ENCODE measurements at regions of chr6 and their contacts with region 1.

Region 1: DNA sequence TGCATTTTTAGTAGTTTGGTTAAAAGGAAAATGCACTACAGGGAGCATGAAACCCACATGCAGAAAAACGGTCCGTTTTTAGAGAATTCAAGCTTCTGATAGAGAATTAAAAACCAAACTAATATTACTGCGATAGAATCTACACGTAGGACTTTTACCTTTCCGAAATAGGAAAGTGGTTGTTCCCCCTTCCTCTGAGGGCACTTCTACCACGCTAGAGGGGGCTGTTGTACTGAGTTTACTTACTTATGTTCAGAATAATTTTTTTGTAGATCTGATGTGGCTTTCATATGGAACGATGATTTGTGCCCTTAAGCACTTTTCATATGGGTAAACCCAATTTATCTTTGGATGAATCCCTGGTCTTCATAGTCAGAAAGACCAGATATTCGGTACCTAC is 264.3 kb upstream of the PLN start:
- DNase-seq: peak; percentile 64
- H3K4me3 ChIP-seq: no peak overlapping the region
- H3K27ac ChIP-seq: no peak overlapping the region
- H3K4me1 ChIP-seq: peaks cover 8% of the 10 kb centered on the region
- H3K27me3 ChIP-seq: peaks cover 0 to 2% of the 10 kb centered on the region in 2 experiments
- CTCF ChIP-seq: peak; percentile 63 to 65
- POLR2A ChIP-seq: no peak

Region 2: GRCh38 chr6:117840541-117840983 is 443.2 kb before region 1 on chr6:
- CTCF ChIA-PET with region 1: interaction called, 4 read pairs
- POLR2A ChIA-PET with region 1: no interaction called
- dilution Hi-C with region 1: no loop called
- intact Hi-C with region 1: loop called (anchors 5 kb)
- DNase-seq: peak; percentile 41
- H3K4me3 ChIP-seq: no peak overlapping the region
- H3K27ac ChIP-seq: no peak overlapping the region
- H3K4me1 ChIP-seq: no peaks in the 10 kb centered on the region
- H3K27me3 ChIP-seq: no peaks in the 10 kb centered on the region
- CTCF ChIP-seq: peak; percentile 9 to 11
- POLR2A ChIP-seq: no peak

Region 3: DNA sequence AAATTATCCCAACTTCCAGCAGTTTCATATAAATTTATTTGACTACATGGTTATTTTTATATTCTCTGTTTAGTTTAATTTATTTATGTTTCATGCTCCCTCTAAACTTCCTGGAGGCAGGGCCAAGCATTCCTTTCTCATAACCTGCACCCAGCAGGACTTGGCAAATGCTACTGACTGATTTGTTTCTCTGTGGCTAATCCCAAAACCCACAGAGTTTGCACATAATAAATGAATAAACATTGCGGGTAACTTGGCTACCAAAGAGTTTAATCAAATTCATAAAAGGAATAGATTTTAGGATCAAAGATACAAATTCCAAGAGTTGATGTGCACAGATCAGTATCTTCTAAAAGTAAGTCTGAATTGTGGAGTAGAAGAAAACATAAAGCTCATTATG is 137.2 kb before region 1 on chr6:
- CTCF ChIA-PET with region 1: no interaction called
- POLR2A ChIA-PET with region 1: no interaction called
- dilution Hi-C with region 1: no loop called
- intact Hi-C with region 1: no loop called
- DNase-seq: no peak
- H3K4me3 ChIP-seq: no peak overlapping the region
- H3K27ac ChIP-seq: no peak overlapping the region
- H3K4me1 ChIP-seq: no peaks in the 10 kb centered on the region
- H3K27me3 ChIP-seq: no peaks in the 10 kb centered on the region
- CTCF ChIP-seq: no peak
- POLR2A ChIP-seq: no peak

Region 4: DNA sequence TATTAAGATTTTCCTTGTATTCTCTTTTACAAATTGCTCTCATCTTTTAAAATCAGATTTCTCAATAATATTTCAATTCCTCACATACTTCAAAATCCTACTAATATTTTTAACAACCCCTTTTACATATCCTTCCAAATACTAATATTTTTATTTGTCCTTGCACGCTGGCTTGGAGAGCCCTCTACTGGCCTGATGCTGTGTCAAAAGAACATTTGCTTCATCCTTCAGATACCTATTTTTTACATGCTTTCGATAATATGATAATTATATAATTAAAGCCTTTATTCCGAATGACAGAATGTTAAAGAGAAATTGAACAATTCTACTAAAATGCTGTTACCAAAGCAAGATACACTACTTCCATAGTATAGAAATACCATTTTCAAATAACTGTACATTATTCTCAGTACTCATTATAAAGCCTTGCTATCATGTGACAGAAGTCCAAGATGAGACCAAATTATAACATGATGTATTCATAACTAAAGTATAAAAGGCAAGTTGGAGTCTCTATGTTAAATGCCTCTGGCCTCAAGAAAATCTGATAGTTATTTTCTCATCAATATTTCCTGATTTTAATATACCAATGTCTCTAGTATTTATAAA is 225.3 kb after region 1 on chr6:
- CTCF ChIA-PET with region 1: interaction called, 42 read pairs
- POLR2A ChIA-PET with region 1: no interaction called
- dilution Hi-C with region 1: no loop called
- intact Hi-C with region 1: loop called (anchors 1 kb)
- DNase-seq: peak; percentile 60
- H3K4me3 ChIP-seq: no peak overlapping the region
- H3K27ac ChIP-seq: no peak overlapping the region
- H3K4me1 ChIP-seq: no peaks in the 10 kb centered on the region
- H3K27me3 ChIP-seq: no peaks in the 10 kb centered on the region
- CTCF ChIP-seq: peak; percentile 48 to 54
- POLR2A ChIP-seq: no peak

Region 5: DNA sequence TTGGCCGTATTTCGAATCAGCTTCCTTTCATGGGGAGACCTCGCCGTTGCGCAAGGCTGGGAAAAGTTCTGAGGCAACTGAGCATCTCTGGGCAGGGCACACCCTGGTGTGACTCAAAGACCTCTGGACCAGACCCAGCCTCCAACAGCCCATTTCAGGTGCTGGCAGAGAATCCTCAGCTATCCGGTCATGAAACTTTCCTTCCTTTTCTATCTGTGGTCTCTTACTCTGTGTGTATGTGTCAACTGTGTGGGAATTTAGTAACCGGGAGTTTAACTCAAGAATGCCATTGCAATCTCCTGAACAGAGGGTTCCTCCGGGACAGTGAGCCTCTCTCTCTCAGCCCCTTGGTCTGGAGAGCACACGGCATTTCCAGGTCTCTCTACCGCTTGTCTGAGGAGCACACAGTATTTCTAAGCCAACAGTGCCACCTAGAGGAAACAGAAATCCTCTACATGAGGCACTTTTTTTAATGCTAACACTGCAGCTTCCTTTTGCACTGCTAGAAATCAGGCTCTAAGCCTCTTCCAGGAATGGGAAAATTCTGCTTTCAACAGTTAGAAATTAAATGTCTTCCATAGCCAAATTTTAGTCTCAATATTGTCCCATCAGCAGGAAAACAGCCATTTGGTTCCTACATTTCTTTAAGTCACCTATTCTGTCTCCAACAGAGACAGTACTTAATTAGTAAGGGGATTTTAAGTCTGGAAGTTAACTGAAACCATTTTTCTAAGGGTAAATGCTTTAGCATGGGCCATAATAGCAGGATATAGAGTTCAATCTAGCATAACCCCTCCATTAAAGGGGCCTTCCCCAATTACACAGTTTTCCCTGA is 297.0 kb after region 1 on chr6:
- CTCF ChIA-PET with region 1: interaction called, 113 read pairs
- POLR2A ChIA-PET with region 1: no interaction called
- dilution Hi-C with region 1: no loop called
- intact Hi-C with region 1: loop called (anchors 1 kb)
- DNase-seq: peak; percentile 68
- H3K4me3 ChIP-seq: no peak overlapping the region
- H3K27ac ChIP-seq: no peak overlapping the region
- H3K4me1 ChIP-seq: no peaks in the 10 kb centered on the region
- H3K27me3 ChIP-seq: no peaks in the 10 kb centered on the region
- CTCF ChIP-seq: peak; percentile 54 to 56
- POLR2A ChIP-seq: no peak

Region 6: GRCh38 chr6:118735320-118735719 is 451.6 kb after region 1 on chr6:
- CTCF ChIA-PET with region 1: no interaction called
- POLR2A ChIA-PET with region 1: no interaction called
- dilution Hi-C with region 1: no loop called
- intact Hi-C with region 1: loop called (anchors 1 kb)
- DNase-seq: peak; percentile 49
- H3K4me3 ChIP-seq: no peak overlapping the region
- H3K27ac ChIP-seq: no peak overlapping the region
- H3K4me1 ChIP-seq: no peaks in the 10 kb centered on the region
- H3K27me3 ChIP-seq: peaks cover 2 to 4% of the 10 kb centered on the region in 2 experiments
- CTCF ChIP-seq: peak; percentile 42 to 66
- POLR2A ChIP-seq: no peak

Region 7: DNA sequence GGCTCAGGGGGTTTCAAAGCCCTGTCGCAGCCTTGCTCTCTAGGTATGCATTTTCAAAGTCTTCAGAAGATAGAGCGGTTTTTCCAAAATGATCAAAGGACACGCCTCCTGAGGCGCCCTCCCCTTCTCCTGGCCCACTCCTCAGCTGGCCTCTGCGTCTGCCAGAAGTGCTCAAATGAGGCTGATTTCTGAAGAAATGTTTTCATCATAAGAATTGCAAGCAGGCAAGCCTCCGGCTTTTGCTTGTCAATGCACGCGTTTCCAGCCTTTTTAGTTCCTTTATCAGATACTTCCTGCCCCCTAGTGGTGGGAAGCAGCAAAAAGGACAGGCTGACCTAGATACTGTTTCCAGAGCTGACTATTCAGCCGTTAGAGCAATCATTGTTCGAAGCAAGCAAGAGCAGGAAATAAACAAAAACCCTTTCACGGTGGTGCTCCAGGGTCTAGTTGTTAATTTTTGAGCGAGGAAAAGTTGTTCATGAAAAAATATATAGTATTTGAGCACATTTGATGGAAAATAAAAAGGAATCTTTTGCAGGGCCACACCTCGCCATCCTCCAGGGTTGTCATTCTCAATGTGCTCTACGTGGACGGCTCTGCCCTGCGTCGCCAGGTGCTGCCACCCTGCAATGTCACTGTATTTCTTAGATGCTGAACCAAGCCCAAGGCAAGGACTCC is 516.8 kb after region 1 on chr6:
- CTCF ChIA-PET with region 1: interaction called, 8 read pairs
- POLR2A ChIA-PET with region 1: no interaction called
- dilution Hi-C with region 1: no loop called
- intact Hi-C with region 1: loop called (anchors 1 kb)
- DNase-seq: peak; percentile 76
- H3K4me3 ChIP-seq: no peak overlapping the region
- H3K27ac ChIP-seq: no peak overlapping the region
- H3K4me1 ChIP-seq: no peaks in the 10 kb centered on the region
- H3K27me3 ChIP-seq: no peaks in the 10 kb centered on the region
- CTCF ChIP-seq: peak; percentile 83 to 86
- POLR2A ChIP-seq: no peak

Region 8: DNA sequence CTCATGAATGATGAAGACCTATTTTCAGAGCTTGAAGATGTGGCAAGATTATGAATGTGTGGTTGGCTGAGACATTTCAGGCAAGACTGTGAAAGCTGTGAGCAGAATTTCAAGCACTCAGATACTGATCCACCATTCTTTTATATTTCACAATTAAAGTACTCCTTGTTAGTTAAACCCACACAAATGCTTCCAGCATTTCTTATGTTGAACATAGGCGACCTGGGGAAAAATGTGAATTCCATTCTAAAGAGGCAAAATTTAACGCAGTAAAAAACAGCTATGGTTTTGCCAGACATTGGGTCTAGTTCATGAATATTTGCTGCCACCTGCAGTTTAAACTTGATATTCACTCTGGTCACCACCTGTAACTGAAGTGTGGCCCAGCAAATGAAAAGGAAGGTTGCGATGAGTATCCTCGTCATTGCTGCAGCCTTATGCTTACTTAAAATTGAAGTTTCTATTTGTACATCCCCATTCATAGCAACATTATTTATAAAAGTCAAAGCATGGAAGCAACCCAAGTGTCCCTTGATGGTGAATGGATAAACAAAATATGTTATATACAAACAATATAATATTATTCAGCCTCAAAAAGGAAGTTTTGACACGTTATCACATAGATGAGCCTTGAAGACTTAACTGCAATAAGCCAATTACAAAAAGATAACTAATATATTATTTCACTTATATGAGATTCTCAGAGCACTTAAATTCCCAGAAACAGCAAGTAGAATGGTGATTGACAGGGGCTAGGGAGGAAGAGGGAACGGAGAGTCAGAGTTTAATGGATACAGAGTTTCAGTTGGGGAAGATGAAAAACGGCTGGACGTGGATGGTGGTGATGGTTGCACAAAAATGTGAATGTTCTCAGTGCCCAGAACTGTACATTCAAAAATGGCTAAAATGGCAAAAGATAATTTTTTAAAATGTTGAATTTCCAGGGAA is 827.1 kb after region 1 on chr6:
- CTCF ChIA-PET with region 1: interaction called, 12 read pairs
- POLR2A ChIA-PET with region 1: no interaction called
- dilution Hi-C with region 1: no loop called
- intact Hi-C with region 1: loop called (anchors 10 kb)
- DNase-seq: peak; percentile 64
- H3K4me3 ChIP-seq: no peak overlapping the region
- H3K27ac ChIP-seq: no peak overlapping the region
- H3K4me1 ChIP-seq: no peaks in the 10 kb centered on the region
- H3K27me3 ChIP-seq: no peaks in the 10 kb centered on the region
- CTCF ChIP-seq: peak; percentile 31 to 34
- POLR2A ChIP-seq: no peak